Activated CD4-positive, alpha-beta T cell treated with anti-CD3 and anti-CD28 coated beads for 36 hours (primary cell): ENCODE measurements at regions of chr2 and their contacts with region 1.

Region 1: GRCh38 chr2:11129598-11130449 is 25.4 kb upstream of the SLC66A3 start:
- DNase-seq: peak; percentile 90
- ATAC-seq: peak; percentile 92
- H3K4me3 Mint-ChIP-seq: peak overlapping the region; percentile 52
- H3K27ac Mint-ChIP-seq: peak overlapping the region; percentile 51
- H3K4me1 Mint-ChIP-seq: peaks cover 28% of the 10 kb centered on the region
- H3K27me3 Mint-ChIP-seq: no peaks in the 10 kb centered on the region

Region 2: GRCh38 chr2:10520154-10520553 is 609.7 kb before region 1 on chr2:
- CTCF ChIA-PET with region 1: no interaction called
- POLR2A ChIA-PET with region 1: no interaction called
- intact Hi-C with region 1: no loop called
- DNase-seq: peak; percentile 34
- ATAC-seq: no peak
- H3K4me3 Mint-ChIP-seq: no peak overlapping the region
- H3K27ac Mint-ChIP-seq: no peak overlapping the region
- H3K4me1 Mint-ChIP-seq: no peaks in the 10 kb centered on the region
- H3K27me3 Mint-ChIP-seq: no peaks in the 10 kb centered on the region

Region 3: GRCh38 chr2:10752280-10752679 is 377.5 kb before region 1 on chr2:
- CTCF ChIA-PET with region 1: no interaction called
- POLR2A ChIA-PET with region 1: no interaction called
- intact Hi-C with region 1: no loop called
- DNase-seq: no peak
- ATAC-seq: no peak
- H3K4me3 Mint-ChIP-seq: no peak overlapping the region
- H3K27ac Mint-ChIP-seq: no peak overlapping the region
- H3K4me1 Mint-ChIP-seq: no peaks in the 10 kb centered on the region
- H3K27me3 Mint-ChIP-seq: peaks cover 2% of the 10 kb centered on the region

Region 4: DNA sequence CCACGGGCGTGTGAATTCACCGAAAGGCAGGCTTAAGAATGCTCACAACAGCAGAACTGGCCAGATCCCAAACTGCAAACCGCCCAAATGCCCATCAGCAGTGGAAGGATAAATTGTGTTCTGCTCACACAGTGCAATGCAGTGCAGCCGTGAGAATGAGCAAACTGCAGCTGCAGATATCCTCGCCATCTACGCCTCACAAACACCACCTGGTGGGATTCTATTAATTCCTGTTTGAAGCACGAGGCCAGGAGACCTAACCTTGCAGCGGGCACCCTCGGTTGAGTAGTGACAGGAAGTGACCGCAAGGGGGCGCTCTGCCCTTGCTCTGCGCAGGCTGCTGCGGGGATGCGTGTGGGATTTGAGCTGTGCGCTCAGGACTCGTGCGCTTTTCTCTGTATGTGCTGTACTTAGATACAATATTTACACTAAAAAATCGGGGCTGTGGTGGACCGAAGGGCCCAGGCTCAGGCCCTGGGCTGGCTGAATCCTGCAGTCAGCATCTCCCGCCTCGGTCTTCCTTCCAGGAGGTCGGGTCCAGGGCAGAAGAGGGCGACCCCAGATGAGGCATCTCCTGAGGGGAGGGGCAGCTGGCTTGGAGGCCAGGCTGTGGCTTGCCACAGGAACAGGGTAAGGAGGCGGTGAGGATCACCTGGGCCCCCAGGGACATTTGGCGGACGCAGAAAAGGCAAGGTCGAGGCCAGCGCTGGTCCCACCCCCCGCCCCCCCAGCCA is 297.5 kb before region 1 on chr2:
- CTCF ChIA-PET with region 1: interaction called, 129 read pairs
- POLR2A ChIA-PET with region 1: no interaction called
- intact Hi-C with region 1: loop called in 1 of 2 experiments (anchors 1 kb)
- DNase-seq: peak; percentile 93
- ATAC-seq: peak; percentile 91
- H3K4me3 Mint-ChIP-seq: no peak overlapping the region
- H3K27ac Mint-ChIP-seq: no peak overlapping the region
- H3K4me1 Mint-ChIP-seq: peaks cover 7% of the 10 kb centered on the region
- H3K27me3 Mint-ChIP-seq: peaks cover 9% of the 10 kb centered on the region

Region 5: DNA sequence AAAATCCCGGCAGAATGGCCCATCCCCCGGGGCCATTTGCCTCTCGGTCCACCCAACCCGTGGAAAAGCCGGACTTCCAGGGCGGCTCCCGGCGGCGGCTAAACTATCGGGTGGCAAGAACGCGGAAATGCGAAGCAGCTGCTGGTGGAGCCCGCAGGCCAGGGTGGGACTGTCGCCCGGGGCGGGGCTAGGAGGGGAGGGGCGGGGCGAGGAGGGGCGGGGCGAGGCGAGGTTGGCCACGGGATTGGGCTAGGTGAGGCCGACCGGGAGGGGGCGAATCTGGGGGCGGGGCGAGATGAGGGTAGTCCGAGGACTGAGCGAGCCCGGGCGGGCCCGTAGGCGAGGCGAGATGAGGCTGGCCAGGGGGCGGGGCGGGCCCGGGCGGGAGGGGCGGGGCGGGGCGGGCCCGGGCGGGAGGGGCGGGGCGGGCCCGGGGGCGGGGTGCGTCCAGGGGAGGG is 25.1 kb after region 1 on chr2:
- CTCF ChIA-PET with region 1: interaction called, 16 read pairs
- POLR2A ChIA-PET with region 1: interaction called, 4 read pairs
- intact Hi-C with region 1: loop called (anchors 1 to 2 kb)
- DNase-seq: peak; percentile 100
- ATAC-seq: peak; percentile 95
- H3K4me3 Mint-ChIP-seq: peak overlapping the region; percentile 73
- H3K27ac Mint-ChIP-seq: peak overlapping the region; percentile 83
- H3K4me1 Mint-ChIP-seq: peaks cover 15% of the 10 kb centered on the region
- H3K27me3 Mint-ChIP-seq: no peaks in the 10 kb centered on the region

Region 6: GRCh38 chr2:11411768-11412448 is 282.1 kb after region 1 on chr2:
- CTCF ChIA-PET with region 1: interaction called, 8 read pairs
- POLR2A ChIA-PET with region 1: no interaction called
- intact Hi-C with region 1: loop called (anchors 1 to 10 kb)
- DNase-seq: no peak
- ATAC-seq: no peak
- H3K4me3 Mint-ChIP-seq: no peak overlapping the region
- H3K27ac Mint-ChIP-seq: no peak overlapping the region
- H3K4me1 Mint-ChIP-seq: peaks cover 4% of the 10 kb centered on the region
- H3K27me3 Mint-ChIP-seq: peaks cover 21% of the 10 kb centered on the region

Region 7: DNA sequence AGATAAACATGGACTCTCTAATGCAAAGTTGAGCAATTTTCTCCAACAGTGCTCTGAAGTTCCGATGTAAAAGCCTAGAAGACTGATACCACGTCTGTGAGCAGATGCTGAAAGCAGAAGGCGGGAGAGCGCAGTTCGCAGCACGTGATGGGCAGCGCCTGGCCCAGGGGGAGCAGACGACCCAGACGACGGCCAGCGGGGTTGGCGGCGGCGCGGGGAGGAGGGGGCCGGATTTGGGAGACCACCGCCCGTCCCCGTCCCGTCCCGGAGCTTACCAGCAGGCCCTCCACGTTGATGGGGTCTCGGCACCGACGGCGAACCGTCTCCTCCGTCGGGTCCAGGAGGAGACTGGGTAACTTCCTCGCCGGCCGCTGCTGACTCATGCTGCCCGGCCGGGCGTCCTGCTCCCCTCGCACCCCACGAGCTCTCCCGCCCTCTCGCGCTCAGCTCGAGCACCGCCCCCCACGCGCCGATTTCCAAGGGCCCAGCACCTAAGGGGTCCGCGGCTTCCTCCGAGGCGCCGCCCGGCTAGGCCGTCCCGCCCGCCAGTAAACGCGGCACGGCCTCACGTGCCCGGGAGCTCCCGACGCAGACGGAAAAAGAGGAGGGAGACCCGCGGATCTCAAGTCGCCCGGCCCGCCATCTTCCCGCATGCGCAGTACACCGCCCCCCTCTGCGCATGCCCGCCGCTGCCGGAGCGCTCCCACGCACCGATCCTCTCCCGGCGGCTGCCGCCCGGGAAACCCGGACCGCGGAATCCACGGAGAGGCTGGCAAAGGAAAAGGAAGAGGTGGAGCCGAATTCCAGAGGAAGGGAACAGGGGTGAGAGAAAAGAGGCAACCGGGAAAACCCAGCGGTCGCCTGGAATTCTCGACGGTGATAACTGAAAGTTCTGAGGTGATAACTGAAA is 335.9 kb after region 1 on chr2 and contains the start of gene E2F6:
- CTCF ChIA-PET with region 1: interaction called, 7 read pairs
- POLR2A ChIA-PET with region 1: no interaction called
- intact Hi-C with region 1: loop called (anchors 5 kb)
- DNase-seq: peak; percentile 92
- ATAC-seq: peak; percentile 85
- H3K4me3 Mint-ChIP-seq: peak within 1 kb of the TSS; percentile 81
- H3K27ac Mint-ChIP-seq: peak within 1 kb of the TSS; percentile 92
- H3K4me1 Mint-ChIP-seq: peaks cover 33% of the 10 kb centered on the region
- H3K27me3 Mint-ChIP-seq: no peaks in the 10 kb centered on the region
- total RNA-seq, gene E2F6: 7.2 to 10.6 TPM

Region 8: DNA sequence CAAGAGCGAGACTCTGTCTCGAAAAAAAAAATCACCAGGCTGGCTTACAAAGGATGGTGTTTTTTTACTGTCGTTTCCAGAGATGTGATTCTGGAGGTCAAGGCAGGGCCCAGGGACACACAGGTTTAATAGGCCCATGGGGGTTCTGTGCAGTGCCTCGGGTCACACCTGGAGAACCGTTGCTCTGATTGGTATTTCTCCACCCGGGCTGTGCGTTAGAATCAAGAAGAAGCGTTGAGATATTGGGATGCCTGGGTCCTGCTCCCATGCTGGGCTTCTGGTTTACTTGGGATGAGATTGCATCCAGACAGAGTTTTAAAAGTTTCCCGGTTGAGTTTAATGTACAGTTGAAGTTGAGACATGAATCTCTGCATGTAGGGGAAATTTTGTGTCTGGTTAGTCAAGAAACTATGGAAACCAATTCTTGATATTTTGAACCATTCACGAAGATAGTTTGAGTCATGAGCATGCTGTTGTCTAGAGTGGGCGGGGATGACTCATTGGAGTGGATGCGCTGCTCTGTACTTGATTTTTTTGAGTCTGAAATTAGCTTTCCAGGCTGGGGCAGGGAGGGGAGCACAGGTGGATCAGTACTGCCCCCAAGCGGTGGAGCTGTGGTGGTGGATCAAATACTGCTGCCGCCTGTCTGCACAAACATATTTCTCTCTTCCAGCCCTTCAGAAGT is 454.2 kb after region 1 on chr2:
- CTCF ChIA-PET with region 1: interaction called, 51 read pairs
- POLR2A ChIA-PET with region 1: interaction called, 3 read pairs
- intact Hi-C with region 1: loop called (anchors 1 kb)
- DNase-seq: peak; percentile 96
- ATAC-seq: peak; percentile 97
- H3K4me3 Mint-ChIP-seq: no peak overlapping the region
- H3K27ac Mint-ChIP-seq: no peak overlapping the region
- H3K4me1 Mint-ChIP-seq: peaks cover 18% of the 10 kb centered on the region
- H3K27me3 Mint-ChIP-seq: peaks cover 10% of the 10 kb centered on the region

Region 9: GRCh38 chr2:11778923-11779757 is 649.3 kb after region 1 on chr2:
- CTCF ChIA-PET with region 1: no interaction called
- POLR2A ChIA-PET with region 1: no interaction called
- intact Hi-C with region 1: loop called in 1 of 2 experiments (anchors 5 kb)
- DNase-seq: peak; percentile 93
- ATAC-seq: peak; percentile 92
- H3K4me3 Mint-ChIP-seq: peak overlapping the region; percentile 49
- H3K27ac Mint-ChIP-seq: peak overlapping the region; percentile 75
- H3K4me1 Mint-ChIP-seq: peaks cover 41% of the 10 kb centered on the region
- H3K27me3 Mint-ChIP-seq: no peaks in the 10 kb centered on the region